Activated naive CD4-positive, alpha-beta T cell treated with anti-CD3 and anti-CD28 coated beads for 36 hours (primary cell): ENCODE measurements at regions of chr6 and their contacts with region 1.

Region 1: GRCh38 chr6:155314092-155314772 is at the start of gene TFB1M:
- DNase-seq: peak; percentile 99
- H3K4me3 Mint-ChIP-seq: peak within 1 kb of the TSS; percentile 97
- H3K27ac Mint-ChIP-seq: peak within 1 kb of the TSS; percentile 93
- H3K4me1 Mint-ChIP-seq: peaks cover 30% of the 10 kb centered on the region
- H3K27me3 Mint-ChIP-seq: no peaks in the 10 kb centered on the region
- total RNA-seq, gene TFB1M: 38.7 to 45.3 TPM

Region 2: GRCh38 chr6:154247119-154247861 is 1066.9 kb before region 1 on chr6:
- CTCF ChIA-PET with region 1: no interaction called
- intact Hi-C with region 1: loop called (anchors 5 kb)
- DNase-seq: peak; percentile 69
- H3K4me3 Mint-ChIP-seq: peak overlapping the region; percentile 87
- H3K27ac Mint-ChIP-seq: peak overlapping the region; percentile 98
- H3K4me1 Mint-ChIP-seq: peaks cover 68% of the 10 kb centered on the region
- H3K27me3 Mint-ChIP-seq: no peaks in the 10 kb centered on the region

Region 3: DNA sequence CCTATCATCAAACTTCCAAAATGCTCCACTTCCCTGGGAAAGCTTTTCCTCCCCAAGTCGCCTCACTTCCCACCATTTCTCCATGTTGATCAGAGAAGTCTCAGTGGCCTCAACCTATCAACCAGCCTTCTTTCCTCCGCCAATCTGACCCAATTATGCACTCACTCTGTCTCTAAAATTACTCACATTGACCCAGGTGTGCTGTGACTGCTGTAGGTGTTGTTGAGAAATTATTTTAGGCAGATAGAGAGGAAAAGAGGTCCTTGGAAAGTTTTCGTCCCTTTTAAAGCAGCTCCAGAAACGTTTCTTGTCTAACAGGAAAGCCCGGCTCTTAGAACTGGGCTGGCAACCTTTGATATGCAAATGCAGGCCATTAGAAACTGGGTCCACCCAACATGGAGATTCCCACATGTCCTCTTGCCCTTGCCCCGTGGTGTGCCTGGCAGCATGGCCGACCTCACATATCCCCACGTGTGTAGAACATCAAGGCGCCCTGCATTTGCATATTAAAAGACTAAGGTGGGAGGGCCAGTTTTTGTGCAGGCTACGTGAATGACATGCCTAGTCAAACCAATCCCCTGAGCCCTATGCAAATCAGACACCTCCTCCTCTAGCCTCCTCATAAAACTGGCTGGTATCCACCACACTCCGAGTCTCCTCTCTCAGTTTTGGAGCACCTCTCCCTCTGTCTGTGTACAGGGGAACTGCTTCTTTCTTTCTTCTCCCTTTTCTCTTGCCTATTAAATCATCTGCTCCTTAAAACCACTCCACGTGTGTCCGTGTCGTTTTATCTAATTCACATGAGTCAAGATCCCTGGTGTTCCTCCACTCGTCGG is 970.5 kb before region 1 on chr6:
- CTCF ChIA-PET with region 1: no interaction called
- intact Hi-C with region 1: no loop called
- DNase-seq: no peak
- H3K4me3 Mint-ChIP-seq: no peak overlapping the region
- H3K27ac Mint-ChIP-seq: no peak overlapping the region
- H3K4me1 Mint-ChIP-seq: no peaks in the 10 kb centered on the region
- H3K27me3 Mint-ChIP-seq: no peaks in the 10 kb centered on the region

Region 4: DNA sequence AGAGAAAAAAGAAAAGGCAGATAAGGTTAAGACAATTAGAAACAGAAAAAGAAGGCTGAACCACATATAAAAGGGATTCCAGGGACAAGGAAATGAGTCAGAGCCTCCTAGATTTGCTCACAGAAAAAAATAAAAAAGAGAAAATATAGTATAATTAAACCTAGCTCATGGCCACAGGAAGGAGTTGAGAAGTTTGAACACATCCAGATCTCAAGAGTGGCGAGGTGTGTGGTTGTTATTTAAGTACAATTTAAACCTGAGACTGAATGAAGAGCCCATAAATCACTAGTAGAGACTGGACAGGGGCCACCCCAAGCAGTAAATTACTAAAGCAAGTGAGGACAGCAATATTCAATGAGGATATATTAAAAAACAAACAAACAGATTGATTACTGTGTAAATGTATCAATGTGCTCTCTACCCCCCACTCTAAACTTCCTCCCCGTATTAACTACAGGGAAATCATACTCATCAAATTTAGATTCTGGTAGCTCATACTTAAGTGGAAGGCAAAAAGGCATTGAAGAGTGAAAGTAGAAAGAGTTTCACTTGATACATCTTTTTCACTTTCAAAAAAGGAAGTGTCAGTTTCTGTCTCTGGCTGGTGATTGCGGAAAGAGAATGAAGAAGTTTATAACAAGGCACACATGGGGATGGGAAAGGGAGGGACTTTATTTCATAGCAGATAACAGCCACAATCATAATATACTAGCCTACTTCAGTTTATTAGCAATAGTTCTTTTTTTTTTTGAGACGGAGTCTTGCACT is 630.3 kb before region 1 on chr6:
- CTCF ChIA-PET with region 1: no interaction called
- intact Hi-C with region 1: loop called (anchors 2 kb)
- DNase-seq: no peak
- H3K4me3 Mint-ChIP-seq: no peak overlapping the region
- H3K27ac Mint-ChIP-seq: no peak overlapping the region
- H3K4me1 Mint-ChIP-seq: peaks cover 14% of the 10 kb centered on the region
- H3K27me3 Mint-ChIP-seq: no peaks in the 10 kb centered on the region

Region 5: GRCh38 chr6:154830771-154831170 is 483.5 kb before region 1 on chr6:
- CTCF ChIA-PET with region 1: no interaction called
- intact Hi-C with region 1: no loop called
- DNase-seq: no peak
- H3K4me3 Mint-ChIP-seq: no peak overlapping the region
- H3K27ac Mint-ChIP-seq: no peak overlapping the region
- H3K4me1 Mint-ChIP-seq: peaks cover 11% of the 10 kb centered on the region
- H3K27me3 Mint-ChIP-seq: no peaks in the 10 kb centered on the region

Region 6: DNA sequence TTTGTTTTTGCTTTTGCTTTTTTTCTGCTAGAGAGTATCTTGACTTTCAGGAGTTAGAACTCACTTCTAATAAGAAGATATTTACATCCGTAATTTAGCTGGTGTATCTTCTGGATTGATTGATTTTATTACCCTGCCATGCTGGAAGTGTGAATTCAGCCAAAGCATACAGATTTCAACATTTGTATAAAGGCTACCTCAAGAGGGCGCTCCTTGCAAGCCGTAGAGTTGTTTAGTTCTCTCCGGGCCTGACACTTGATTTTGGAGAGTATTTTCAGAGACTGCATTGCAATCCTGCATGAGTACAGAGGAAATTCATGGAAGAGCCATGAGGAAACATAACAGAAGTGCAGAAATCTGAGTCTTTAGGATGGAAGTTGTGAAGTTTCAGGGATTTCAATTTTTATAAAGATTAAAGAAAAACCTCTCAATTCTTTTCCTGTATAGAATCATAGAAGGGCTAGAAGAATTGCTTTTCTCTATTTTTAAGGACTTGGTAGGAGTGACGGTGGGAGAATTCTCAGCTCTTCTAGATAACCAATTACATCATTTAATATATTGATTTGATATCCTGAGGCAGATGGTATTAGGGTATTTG is 385.8 kb before region 1 on chr6:
- CTCF ChIA-PET with region 1: interaction called, 6 read pairs
- intact Hi-C with region 1: loop called (anchors 1 kb)
- DNase-seq: peak; percentile 88
- H3K4me3 Mint-ChIP-seq: no peak overlapping the region
- H3K27ac Mint-ChIP-seq: no peak overlapping the region
- H3K4me1 Mint-ChIP-seq: peaks cover 3% of the 10 kb centered on the region
- H3K27me3 Mint-ChIP-seq: no peaks in the 10 kb centered on the region

Region 7: GRCh38 chr6:155223646-155224451 is 90.4 kb before region 1 on chr6:
- CTCF ChIA-PET with region 1: interaction called, 5 read pairs
- intact Hi-C with region 1: loop called (anchors 1 kb)
- DNase-seq: peak; percentile 82
- H3K4me3 Mint-ChIP-seq: no peak overlapping the region
- H3K27ac Mint-ChIP-seq: peak overlapping the region; percentile 74
- H3K4me1 Mint-ChIP-seq: peaks cover 25% of the 10 kb centered on the region
- H3K27me3 Mint-ChIP-seq: peaks cover 18% of the 10 kb centered on the region

Region 8: DNA sequence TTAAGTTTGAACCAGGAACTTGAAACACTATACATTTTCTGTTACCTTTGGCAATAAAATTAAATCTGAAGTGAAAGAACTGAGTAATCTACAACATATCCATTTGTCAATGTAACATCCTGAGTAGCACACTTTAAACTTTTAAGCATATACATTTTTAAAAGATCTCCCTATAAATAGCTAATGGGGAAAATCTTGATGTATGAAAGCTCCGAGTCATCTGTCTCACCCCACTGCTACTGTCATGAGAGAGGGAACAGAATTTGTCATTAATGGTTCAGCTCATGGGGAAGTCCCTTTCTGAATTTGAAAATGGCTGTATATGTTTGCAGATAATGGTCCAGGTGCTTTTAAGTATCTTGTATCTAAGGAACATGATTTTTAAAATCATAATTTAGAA is 196.6 kb after region 1 on chr6:
- CTCF ChIA-PET with region 1: no interaction called
- intact Hi-C with region 1: no loop called
- DNase-seq: peak; percentile 40
- H3K4me3 Mint-ChIP-seq: no peak overlapping the region
- H3K27ac Mint-ChIP-seq: peak overlapping the region; percentile 73
- H3K4me1 Mint-ChIP-seq: peaks cover 23% of the 10 kb centered on the region
- H3K27me3 Mint-ChIP-seq: no peaks in the 10 kb centered on the region

Region 9: GRCh38 chr6:155523821-155524651 is 209.8 kb after region 1 on chr6:
- CTCF ChIA-PET with region 1: interaction called, 4 read pairs
- intact Hi-C with region 1: loop called (anchors 1 kb)
- DNase-seq: peak; percentile 43
- H3K4me3 Mint-ChIP-seq: no peak overlapping the region
- H3K27ac Mint-ChIP-seq: peak overlapping the region; percentile 84
- H3K4me1 Mint-ChIP-seq: peaks cover 47% of the 10 kb centered on the region
- H3K27me3 Mint-ChIP-seq: no peaks in the 10 kb centered on the region

Region 10: DNA sequence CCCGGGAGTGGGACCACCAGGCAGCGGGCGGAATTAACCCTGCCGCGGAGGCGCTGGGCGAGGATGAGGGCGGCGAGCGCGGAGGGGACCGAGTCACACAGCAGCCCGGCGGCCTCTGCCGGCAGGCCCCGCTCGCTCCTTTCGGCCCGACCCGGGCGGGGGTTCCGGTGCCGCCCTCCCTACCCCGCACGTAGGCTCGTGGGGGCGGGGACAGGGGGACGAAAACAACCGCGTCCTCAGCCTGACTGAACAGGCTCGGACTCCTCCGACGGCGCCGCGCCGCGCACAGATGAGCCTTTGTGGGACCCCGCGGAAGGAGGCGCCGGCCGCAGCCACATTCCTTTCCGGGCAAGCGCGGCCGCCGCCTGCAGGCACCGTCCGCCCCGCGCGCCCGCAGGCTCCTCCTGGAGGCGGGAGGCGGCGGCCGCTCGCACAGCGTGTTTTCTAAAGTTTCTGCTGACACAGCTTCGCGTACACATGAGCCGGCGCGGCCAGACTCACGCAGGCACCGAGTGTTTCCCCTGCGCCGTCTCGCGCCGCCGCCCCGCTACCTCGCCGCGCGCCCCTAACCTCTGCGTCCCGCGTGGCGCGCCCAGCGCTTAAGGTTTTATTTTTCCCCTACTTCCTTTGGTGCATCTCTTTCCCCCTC is 1707.2 kb after region 1 on chr6:
- CTCF ChIA-PET with region 1: no interaction called
- intact Hi-C with region 1: loop called (anchors 2 kb)
- DNase-seq: peak; percentile 90
- H3K4me3 Mint-ChIP-seq: peak overlapping the region; percentile 92
- H3K27ac Mint-ChIP-seq: peak overlapping the region; percentile 99
- H3K4me1 Mint-ChIP-seq: peaks cover 64% of the 10 kb centered on the region
- H3K27me3 Mint-ChIP-seq: no peaks in the 10 kb centered on the region